ENCODE measurements at regions of chr11 and their contacts with region 1.

Region 1: GRCh38 chr11:118791111-118791965 is at the start of gene DDX6:
- H3K4me3 ChIP-seq: peak within 1 kb of the TSS; percentile 97
- H3K27ac ChIP-seq: peak within 1 kb of the TSS; percentile 97
- H3K4me1 ChIP-seq: 0 out of 2 replicates have a peak, but pooled peaks cover 4% of the 10 kb centered on the region
- CTCF ChIP-seq: peak; percentile 91

Region 2: DNA sequence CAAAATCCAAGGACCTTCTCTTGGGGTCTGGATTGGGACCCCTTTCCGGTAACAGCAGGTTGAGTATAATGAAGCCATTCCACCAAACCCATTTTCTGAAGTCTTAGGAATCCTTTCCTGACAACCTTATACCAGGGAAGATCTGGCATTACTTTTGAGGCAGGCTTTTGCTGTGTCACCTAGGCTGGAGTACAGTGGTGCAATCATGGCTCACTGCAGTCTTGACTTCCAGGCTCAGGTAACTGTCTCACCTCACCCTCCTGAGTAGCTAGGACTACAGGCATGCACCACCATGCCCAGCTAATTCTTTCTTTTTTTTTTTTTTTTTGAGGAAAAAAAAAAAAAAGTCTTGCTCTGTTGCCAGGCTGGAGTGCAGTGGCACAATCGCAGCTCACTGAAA is 56.1 kb before region 1 on chr11:
- CTCF ChIA-PET with region 1: no interaction called
- POLR2A ChIA-PET with region 1: no interaction called
- H3K4me3 ChIP-seq: no peak overlapping the region
- H3K27ac ChIP-seq: no peak overlapping the region
- H3K4me1 ChIP-seq: no peaks in the 10 kb centered on the region
- CTCF ChIP-seq: no peak

Region 3: DNA sequence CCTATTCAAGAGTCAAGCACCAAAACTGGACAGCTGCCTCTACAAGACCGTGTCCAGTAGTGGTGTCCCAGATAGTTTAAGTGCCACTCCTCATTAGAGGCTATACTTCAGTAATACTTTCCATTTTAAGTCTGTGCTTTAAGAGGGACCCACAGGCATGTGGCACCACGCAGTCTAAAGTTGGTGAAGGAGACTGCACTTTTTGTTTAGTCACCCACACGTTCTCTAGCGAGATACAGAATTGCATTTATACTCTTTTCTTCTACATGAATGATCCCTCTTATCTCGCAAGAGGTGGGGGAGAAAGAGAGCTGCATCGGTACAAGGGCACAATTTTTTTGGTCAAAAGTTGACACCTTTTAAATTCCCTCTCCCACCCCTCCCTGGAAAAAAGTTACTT is 41.9 kb before region 1 on chr11:
- CTCF ChIA-PET with region 1: no interaction called
- POLR2A ChIA-PET with region 1: no interaction called
- H3K4me3 ChIP-seq: no peak overlapping the region
- H3K27ac ChIP-seq: no peak overlapping the region
- H3K4me1 ChIP-seq: no peaks in the 10 kb centered on the region
- CTCF ChIP-seq: no peak

Region 4: GRCh38 chr11:118804094-118804493 is 12.8 kb after region 1 on chr11:
- CTCF ChIA-PET with region 1: interaction called, 9 read pairs
- POLR2A ChIA-PET with region 1: interaction called, 17 read pairs
- H3K4me3 ChIP-seq: no peak overlapping the region
- H3K27ac ChIP-seq: no peak overlapping the region
- H3K4me1 ChIP-seq: no peaks in the 10 kb centered on the region
- CTCF ChIP-seq: no peak

Measured in HEK293 (cell line).